ENCODE measurements at regions of chr10 and their contacts with region 1.

Region 1: GRCh38 chr10:73979141-73979808 is 18.6 kb upstream of the VCL start:
- DNase-seq: no peak
- ATAC-seq: no peak
- H3K4me3 ChIP-seq: no peak overlapping the region
- H3K4me3 Mint-ChIP-seq: no peak overlapping the region
- H3K27ac ChIP-seq: no peak overlapping the region
- H3K27ac Mint-ChIP-seq: no peak overlapping the region
- H3K4me1 ChIP-seq: peaks cover 4 to 7% of the 10 kb centered on the region in 2 experiments
- H3K4me1 Mint-ChIP-seq: peaks cover 19 to 31% (median 25%) of the 10 kb centered on the region in 3 donors
- H3K27me3 ChIP-seq: no peaks in the 10 kb centered on the region
- H3K27me3 Mint-ChIP-seq: no peaks in the 10 kb centered on the region

Region 2: DNA sequence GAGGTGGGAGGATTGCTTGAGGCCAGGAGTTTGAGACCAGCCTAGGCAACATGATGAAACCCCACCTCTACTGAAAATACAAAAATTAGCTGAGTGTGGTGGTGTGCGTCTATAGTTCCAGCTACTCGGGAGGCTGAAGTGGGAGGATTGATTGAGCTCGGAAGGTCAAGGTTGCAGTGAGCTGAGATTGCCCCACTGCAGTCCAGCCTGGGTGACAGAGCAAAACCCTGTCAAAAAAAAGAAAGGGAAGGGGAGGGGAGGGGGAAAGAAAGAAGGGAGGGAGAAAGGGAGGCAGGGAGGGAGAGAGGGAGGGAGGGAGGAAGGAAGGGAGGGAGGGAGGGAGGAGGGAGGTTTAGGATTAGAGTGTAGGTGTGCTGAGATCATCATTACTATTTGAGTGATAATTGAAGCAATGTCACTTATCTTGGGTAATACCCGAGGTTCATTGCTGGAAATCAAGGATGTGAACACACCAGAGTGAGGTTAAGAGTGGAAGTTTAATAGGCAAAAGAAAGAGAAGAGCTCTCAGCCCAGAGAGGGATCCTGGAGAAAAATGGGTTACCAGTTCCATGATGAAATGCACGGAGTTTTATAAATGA is 46.2 kb after region 1 on chr10:
- CTCF ChIA-PET with region 1: no interaction called
- POLR2A ChIA-PET with region 1: interaction called, 3 to 12 read pairs
- DNase-seq: no peak
- ATAC-seq: no peak
- H3K4me3 ChIP-seq: no peak overlapping the region
- H3K4me3 Mint-ChIP-seq: no peak overlapping the region
- H3K27ac ChIP-seq: no peak overlapping the region
- H3K27ac Mint-ChIP-seq: no peak overlapping the region
- H3K4me1 ChIP-seq: peaks cover 0 to under 1% of the 10 kb centered on the region in 2 experiments
- H3K4me1 Mint-ChIP-seq: peaks cover 26 to 43% (median 40%) of the 10 kb centered on the region in 3 donors
- H3K27me3 ChIP-seq: no peaks in the 10 kb centered on the region
- H3K27me3 Mint-ChIP-seq: no peaks in the 10 kb centered on the region